ENCODE measurements at regions of chr17 and their contacts with region 1.

Region 1: GRCh38 chr17:47970704-47971463 is at the start of gene CDK5RAP3:
- DNase-seq: peak; percentile 99
- ATAC-seq: peak; percentile 98
- H3K4me3 ChIP-seq: peak within 1 kb of the TSS; percentile 79 to 99 (median 94)
- H3K4me3 Mint-ChIP-seq: peak within 1 kb of the TSS; percentile 98
- H3K27ac ChIP-seq: peak within 1 kb of the TSS; percentile 82 to 83
- H3K27ac Mint-ChIP-seq: peak within 1 kb of the TSS; percentile 95
- H3K4me1 ChIP-seq: peaks cover 19 to 28% of the 10 kb centered on the region in 2 donors
- H3K4me1 Mint-ChIP-seq: peaks cover 26% of the 10 kb centered on the region
- H3K27me3 ChIP-seq: no peaks in the 10 kb centered on the region
- H3K27me3 Mint-ChIP-seq: no peaks in the 10 kb centered on the region
- CTCF ChIP-seq: peak; percentile 95
- total RNA-seq, gene CDK5RAP3: 415 and 417 TPM in 2 replicates

Region 2: DNA sequence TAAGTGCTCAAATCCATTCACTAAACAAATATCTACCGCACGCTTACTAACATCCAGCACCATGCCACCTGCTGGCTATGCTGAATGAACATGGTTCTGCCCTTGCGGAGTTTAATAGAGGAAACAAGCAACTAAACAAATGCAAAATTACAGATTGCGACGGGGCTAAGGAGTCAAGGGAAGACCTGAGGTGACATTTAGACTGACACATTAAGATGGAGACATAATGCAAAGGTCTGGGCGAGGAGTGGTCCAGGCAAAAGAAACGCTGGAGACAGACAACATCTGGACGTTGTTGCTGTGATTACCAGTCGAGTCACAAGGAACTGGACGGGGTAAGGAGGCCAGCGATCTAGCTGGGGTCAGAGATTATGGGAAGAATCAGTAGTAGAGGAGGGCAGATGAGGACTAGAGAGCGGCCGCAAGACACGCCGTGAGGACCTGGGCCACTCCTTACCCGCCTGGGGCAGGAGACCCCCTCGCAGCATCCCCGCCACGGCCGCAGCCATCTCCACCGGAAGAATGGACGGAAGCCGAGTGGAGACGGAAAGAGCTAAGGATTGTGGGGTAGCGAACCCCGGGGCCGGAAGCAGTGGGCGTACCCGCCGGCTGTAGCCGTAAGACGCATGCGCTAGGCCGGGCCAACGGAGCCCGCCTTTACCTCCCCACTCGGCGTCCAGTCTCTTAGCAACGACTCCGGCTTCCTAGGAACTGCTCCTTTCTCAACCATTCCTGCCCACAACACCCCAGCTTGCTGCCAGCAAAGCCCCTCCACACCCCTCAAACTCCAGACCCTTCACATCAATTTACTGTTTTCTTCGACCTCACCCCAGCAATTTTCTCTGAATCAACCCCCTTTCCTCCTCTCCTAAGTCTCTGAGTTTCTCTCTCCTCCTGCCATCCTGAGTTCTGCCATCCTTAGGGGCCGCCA is 139.6 kb before region 1 on chr17 and contains the starts of genes LRRC46 and MRPL10:
- CTCF ChIA-PET with region 1: no interaction called
- POLR2A ChIA-PET with region 1: no interaction called
- intact Hi-C with region 1: loop called (anchors 2 kb)
- DNase-seq: peak; percentile 93
- ATAC-seq: peak; percentile 94
- H3K4me3 ChIP-seq: peak within 1 kb of the TSS; percentile 70 to 97 (median 96)
- H3K4me3 Mint-ChIP-seq: peak within 1 kb of the TSS; percentile 92
- H3K27ac ChIP-seq: peak within 1 kb of the TSS; percentile 69 to 81
- H3K27ac Mint-ChIP-seq: peak within 1 kb of the TSS; percentile 89
- H3K4me1 ChIP-seq: peaks cover 19 to 21% of the 10 kb centered on the region in 2 donors
- H3K4me1 Mint-ChIP-seq: peaks cover 25% of the 10 kb centered on the region
- H3K27me3 ChIP-seq: no peaks in the 10 kb centered on the region
- H3K27me3 Mint-ChIP-seq: no peaks in the 10 kb centered on the region
- CTCF ChIP-seq: peak; percentile 40
- total RNA-seq, gene LRRC46: 2.2 and 2.4 TPM in 2 replicates
- total RNA-seq, gene MRPL10: 34.8 and 37.4 TPM in 2 replicates

Region 3: DNA sequence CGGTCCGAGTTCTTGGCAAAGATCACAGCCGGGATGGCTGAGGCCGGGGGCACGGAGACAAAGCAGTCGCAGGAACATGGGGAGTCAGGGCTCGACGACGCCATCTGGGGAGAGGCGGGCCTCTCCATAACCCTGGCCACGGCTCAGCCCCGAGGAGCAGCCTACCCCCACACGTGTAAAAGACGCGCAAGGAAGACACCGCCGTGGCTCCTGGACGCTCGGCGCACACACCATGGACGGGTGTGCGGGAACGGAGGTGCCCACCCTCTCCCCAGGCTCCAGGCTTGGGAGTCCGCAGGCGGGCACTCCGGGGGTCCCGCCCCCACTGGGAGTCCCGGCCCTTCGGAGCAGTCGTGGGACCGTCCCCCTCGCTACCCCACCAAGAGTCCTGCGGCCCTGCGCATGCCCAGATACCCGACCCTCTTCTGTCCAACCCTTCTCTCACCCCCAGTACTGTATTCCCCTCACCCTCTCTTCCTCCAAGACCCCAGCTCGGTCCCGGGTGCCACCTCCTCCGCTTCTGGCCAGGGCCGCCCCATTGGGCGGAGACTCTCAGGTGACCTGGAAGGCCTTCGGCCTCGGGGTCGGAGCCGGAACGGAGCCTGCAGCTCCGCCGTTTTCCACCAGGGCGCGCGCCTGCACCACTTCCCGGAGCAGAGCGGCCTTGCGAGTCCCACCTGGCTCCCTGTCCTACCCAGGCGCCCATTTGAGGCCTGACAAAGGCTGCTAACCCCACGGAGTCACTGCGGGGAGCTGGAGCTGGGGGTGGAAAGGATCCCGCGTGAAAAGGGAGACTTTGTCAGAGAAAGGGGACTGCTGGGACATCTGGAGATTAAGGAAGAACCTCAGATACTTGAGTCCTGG is 129.9 kb before region 1 on chr17 and contains the start of gene SCRN2:
- CTCF ChIA-PET with region 1: interaction called, 12 read pairs
- POLR2A ChIA-PET with region 1: interaction called, 4 read pairs
- intact Hi-C with region 1: loop called (anchors 2 kb)
- DNase-seq: peak; percentile 90
- ATAC-seq: peak; percentile 94
- H3K4me3 ChIP-seq: peak within 1 kb of the TSS; percentile 58 to 87 (median 79)
- H3K4me3 Mint-ChIP-seq: peak within 1 kb of the TSS; percentile 97
- H3K27ac ChIP-seq: peak within 1 kb of the TSS; percentile 26 to 75
- H3K27ac Mint-ChIP-seq: peak within 1 kb of the TSS; percentile 89
- H3K4me1 ChIP-seq: peaks cover 10 to 18% of the 10 kb centered on the region in 2 donors
- H3K4me1 Mint-ChIP-seq: peaks cover 26% of the 10 kb centered on the region
- H3K27me3 ChIP-seq: peaks cover 0 to 23% (median 12%) of the 10 kb centered on the region in 4 experiments
- H3K27me3 Mint-ChIP-seq: peaks cover 20% of the 10 kb centered on the region
- CTCF ChIP-seq: peak; percentile 94
- total RNA-seq, gene SCRN2: 47.8 and 53.8 TPM in 2 replicates

Region 4: GRCh38 chr17:47941236-47941994 is 29.5 kb before region 1 on chr17 and contains the start of gene PNPO:
- CTCF ChIA-PET with region 1: interaction called, 155 read pairs
- POLR2A ChIA-PET with region 1: interaction called, 18 read pairs
- intact Hi-C with region 1: loop called (anchors 1 kb)
- DNase-seq: peak; percentile 94
- ATAC-seq: peak; percentile 99
- H3K4me3 ChIP-seq: peak within 1 kb of the TSS; percentile 50 to 84 (median 76)
- H3K4me3 Mint-ChIP-seq: peak within 1 kb of the TSS; percentile 88
- H3K27ac ChIP-seq: peak within 1 kb of the TSS; percentile 63 to 83
- H3K27ac Mint-ChIP-seq: peak within 1 kb of the TSS; percentile 82
- H3K4me1 ChIP-seq: peaks cover 11 to 22% of the 10 kb centered on the region in 2 donors
- H3K4me1 Mint-ChIP-seq: peaks cover 31% of the 10 kb centered on the region
- H3K27me3 ChIP-seq: no peaks in the 10 kb centered on the region
- H3K27me3 Mint-ChIP-seq: no peaks in the 10 kb centered on the region
- CTCF ChIP-seq: no peak
- total RNA-seq, gene PNPO: 12.4 and 14.7 TPM in 2 replicates

Region 5: GRCh38 chr17:47949136-47949759 is 21.6 kb before region 1 on chr17:
- CTCF ChIA-PET with region 1: interaction called, 155 read pairs
- POLR2A ChIA-PET with region 1: interaction called, 6 read pairs
- intact Hi-C with region 1: loop called (anchors 1 kb)
- DNase-seq: peak; percentile 80
- ATAC-seq: peak; percentile 81
- H3K4me3 ChIP-seq: peak overlapping the region in 3 of 5 experiments; percentile 31 to 46 (median 38)
- H3K4me3 Mint-ChIP-seq: peak overlapping the region; percentile 78
- H3K27ac ChIP-seq: peak overlapping the region in 1 of 2 donors; percentile 63
- H3K27ac Mint-ChIP-seq: peak overlapping the region; percentile 66
- H3K4me1 ChIP-seq: peaks cover 13 to 23% of the 10 kb centered on the region in 2 donors
- H3K4me1 Mint-ChIP-seq: peaks cover 23% of the 10 kb centered on the region
- H3K27me3 ChIP-seq: no peaks in the 10 kb centered on the region
- H3K27me3 Mint-ChIP-seq: no peaks in the 10 kb centered on the region
- CTCF ChIP-seq: peak; percentile 89

Region 6: DNA sequence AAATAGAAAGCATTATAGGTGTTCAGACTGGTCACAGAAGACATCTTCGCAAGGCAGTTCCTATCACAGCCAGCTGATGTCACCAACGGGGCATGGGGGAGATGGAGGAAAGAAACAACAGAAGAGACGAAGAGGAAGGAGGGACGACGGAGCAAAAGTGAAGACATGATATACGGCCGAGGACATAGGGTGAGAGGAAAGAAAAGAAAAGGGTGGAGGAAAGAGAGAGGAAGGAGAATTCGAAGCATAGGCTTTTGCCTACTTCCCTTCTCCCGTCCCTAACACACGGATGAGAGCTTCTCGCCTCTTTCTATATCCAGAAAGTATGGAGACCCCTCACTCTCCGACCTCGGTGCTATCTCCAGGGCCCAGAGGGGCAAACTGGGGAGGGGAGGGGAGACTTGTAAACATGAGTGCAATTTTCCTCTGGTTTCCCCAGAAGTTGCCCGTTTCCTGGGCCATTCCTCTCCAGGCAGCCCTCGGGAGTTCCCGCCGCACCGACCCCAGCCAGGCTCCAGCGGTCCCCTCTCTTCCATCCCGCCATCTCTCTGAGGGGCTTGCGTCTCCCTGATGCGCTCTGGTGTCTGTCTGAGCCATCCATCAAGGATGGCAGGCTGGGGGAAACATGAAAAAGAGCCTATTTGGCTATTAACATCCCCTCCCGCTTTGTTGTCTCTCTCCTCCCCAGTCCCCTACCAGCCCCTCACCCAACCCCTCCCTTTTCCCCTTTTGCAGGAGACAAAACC is 40.7 kb after region 1 on chr17:
- CTCF ChIA-PET with region 1: interaction called, 11 read pairs
- POLR2A ChIA-PET with region 1: no interaction called
- intact Hi-C with region 1: loop called (anchors 2 kb)
- DNase-seq: peak; percentile 61
- ATAC-seq: peak; percentile 67
- H3K4me3 ChIP-seq: peak overlapping the region; percentile 15 to 72 (median 38)
- H3K4me3 Mint-ChIP-seq: peak overlapping the region; percentile 83
- H3K27ac ChIP-seq: no peak overlapping the region
- H3K27ac Mint-ChIP-seq: peak overlapping the region; percentile 32
- H3K4me1 ChIP-seq: peaks cover 14% of the 10 kb centered on the region in 2 donors
- H3K4me1 Mint-ChIP-seq: peaks cover 17% of the 10 kb centered on the region
- H3K27me3 ChIP-seq: peaks cover 0 to 40% (median 19%) of the 10 kb centered on the region in 4 experiments
- H3K27me3 Mint-ChIP-seq: peaks cover 34% of the 10 kb centered on the region
- CTCF ChIP-seq: peak; percentile 52

Region 7: GRCh38 chr17:48047741-48048383 is 77.0 kb after region 1 on chr17 and contains the start of gene NFE2L1:
- CTCF ChIA-PET with region 1: interaction called, 7 read pairs
- POLR2A ChIA-PET with region 1: interaction called, 3 read pairs
- intact Hi-C with region 1: loop called (anchors 1 kb)
- DNase-seq: peak; percentile 98
- ATAC-seq: peak; percentile 94
- H3K4me3 ChIP-seq: peak within 1 kb of the TSS; percentile 63 to 84 (median 78)
- H3K4me3 Mint-ChIP-seq: peak within 1 kb of the TSS; percentile 97
- H3K27ac ChIP-seq: peak within 1 kb of the TSS; percentile 87 to 90
- H3K27ac Mint-ChIP-seq: peak within 1 kb of the TSS; percentile 100
- H3K4me1 ChIP-seq: peaks cover 30 to 35% of the 10 kb centered on the region in 2 donors
- H3K4me1 Mint-ChIP-seq: peaks cover 52% of the 10 kb centered on the region
- H3K27me3 ChIP-seq: no peaks in the 10 kb centered on the region
- H3K27me3 Mint-ChIP-seq: no peaks in the 10 kb centered on the region
- CTCF ChIP-seq: no peak
- total RNA-seq, gene NFE2L1: 58.1 and 66.4 TPM in 2 replicates

Region 8: GRCh38 chr17:48058393-48059124 is 87.7 kb after region 1 on chr17:
- CTCF ChIA-PET with region 1: no interaction called
- POLR2A ChIA-PET with region 1: no interaction called
- intact Hi-C with region 1: no loop called
- DNase-seq: no peak
- ATAC-seq: no peak
- H3K4me3 ChIP-seq: no peak overlapping the region
- H3K4me3 Mint-ChIP-seq: no peak overlapping the region
- H3K27ac ChIP-seq: no peak overlapping the region
- H3K27ac Mint-ChIP-seq: peak overlapping the region; percentile 41
- H3K4me1 ChIP-seq: peaks cover 18 to 22% of the 10 kb centered on the region in 2 donors
- H3K4me1 Mint-ChIP-seq: peaks cover 26% of the 10 kb centered on the region
- H3K27me3 ChIP-seq: no peaks in the 10 kb centered on the region
- H3K27me3 Mint-ChIP-seq: no peaks in the 10 kb centered on the region
- CTCF ChIP-seq: no peak